AG04450 (cell line): ENCODE measurements at regions of chr5 and their contacts with region 1.

Region 1: GRCh38 chr5:139765409-139766217 is 30.0 kb upstream of the PSD2 start:
- DNase-seq: no peak
- H3K4me3 ChIP-seq: peak overlapping the region; percentile 71
- H3K27ac ChIP-seq: no peak overlapping the region
- H3K27me3 ChIP-seq: peaks cover 19% of the 10 kb centered on the region
- CTCF ChIP-seq: peak; percentile 83

Region 2: DNA sequence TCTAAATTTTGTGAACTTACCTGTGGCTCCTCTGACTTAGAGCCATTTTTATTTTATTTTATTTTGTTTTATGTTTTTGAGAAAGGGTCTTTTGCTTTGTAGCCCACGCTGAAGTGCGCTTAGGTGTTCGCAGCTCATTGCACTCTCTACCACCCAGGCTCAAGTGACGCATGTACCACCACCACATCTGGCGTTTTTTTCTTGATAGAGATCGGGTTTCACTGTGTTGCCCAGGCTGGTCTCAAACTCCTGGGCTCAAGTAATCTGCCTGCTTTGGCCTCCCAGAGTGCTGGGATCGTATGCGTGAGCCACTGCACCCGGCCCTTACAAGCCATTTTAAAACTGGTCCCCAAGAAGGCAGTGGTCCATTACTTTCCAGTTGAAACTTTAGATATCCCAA is 453.5 kb before region 1 on chr5:
- CTCF ChIA-PET with region 1: no interaction called
- POLR2A ChIA-PET with region 1: no interaction called
- DNase-seq: no peak
- H3K4me3 ChIP-seq: no peak overlapping the region
- H3K27ac ChIP-seq: no peak overlapping the region
- H3K27me3 ChIP-seq: no peaks in the 10 kb centered on the region
- CTCF ChIP-seq: no peak

Region 3: DNA sequence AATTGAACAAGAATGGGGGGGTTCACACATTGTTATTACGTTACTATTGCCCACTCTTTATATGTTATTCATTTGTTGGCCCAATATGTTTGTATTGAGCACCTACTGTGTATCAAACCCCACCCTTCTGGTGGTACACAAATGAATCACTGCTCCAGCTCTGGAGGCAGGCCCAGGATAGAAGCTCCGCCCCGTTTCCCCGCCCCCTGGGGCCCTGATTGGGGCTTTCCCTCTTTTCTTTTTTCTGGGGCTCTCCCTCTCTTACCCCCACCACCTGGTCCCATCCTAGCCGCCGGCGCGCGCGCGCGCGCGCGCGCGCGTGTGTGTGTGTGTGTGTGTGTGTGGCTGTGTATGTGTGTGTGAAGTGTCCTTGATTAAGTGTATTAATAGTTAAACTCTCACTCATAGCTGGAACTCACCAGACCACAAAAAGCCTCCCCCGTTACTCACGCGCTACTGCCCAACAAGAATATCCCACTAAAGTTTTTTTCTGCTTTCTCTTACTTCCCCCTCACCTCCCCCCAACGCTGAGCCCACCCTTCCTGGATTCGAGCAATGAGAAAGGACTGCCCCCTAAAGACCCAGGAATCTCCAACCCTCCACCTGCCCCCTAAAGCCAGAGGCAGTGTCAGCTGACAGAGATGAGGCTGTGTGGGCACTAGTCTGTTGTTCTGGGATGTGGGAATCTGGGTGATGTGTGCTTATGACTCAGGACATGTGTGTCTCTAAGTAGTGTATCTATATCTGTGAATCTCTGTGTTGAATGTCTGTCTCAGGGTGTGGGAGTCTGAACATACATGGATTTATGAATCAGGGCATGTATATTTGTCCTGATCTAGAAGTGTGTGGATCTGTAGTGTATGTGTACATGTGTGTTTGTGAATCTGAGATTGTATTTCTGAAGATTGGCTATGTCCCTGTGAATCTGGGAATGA is 113.5 kb before region 1 on chr5:
- CTCF ChIA-PET with region 1: interaction called, 16 read pairs
- POLR2A ChIA-PET with region 1: no interaction called
- DNase-seq: no peak
- H3K4me3 ChIP-seq: peak overlapping the region; percentile 80
- H3K27ac ChIP-seq: peak overlapping the region; percentile 96
- H3K27me3 ChIP-seq: no peaks in the 10 kb centered on the region
- CTCF ChIP-seq: no peak

Region 4: GRCh38 chr5:139752506-139753473 is 12.8 kb before region 1 on chr5:
- CTCF ChIA-PET with region 1: interaction called, 10 read pairs
- POLR2A ChIA-PET with region 1: no interaction called
- DNase-seq: no peak
- H3K4me3 ChIP-seq: no peak overlapping the region
- H3K27ac ChIP-seq: no peak overlapping the region
- H3K27me3 ChIP-seq: peaks cover 33% of the 10 kb centered on the region
- CTCF ChIP-seq: no peak